ENCODE measurements at regions of chr1 and their contacts with region 1.

Region 1: GRCh38 chr1:58768971-58769808 is 14.7 kb downstream of the JUN start:
- DNase-seq: peak; percentile 42
- H3K4me3 ChIP-seq: no peak overlapping the region
- H3K27ac ChIP-seq: no peak overlapping the region
- H3K4me1 ChIP-seq: peaks cover 16% of the 10 kb centered on the region
- H3K27me3 ChIP-seq: no peaks in the 10 kb centered on the region
- CTCF ChIP-seq: peak; percentile 72 to 85

Region 2: GRCh38 chr1:58515794-58516401 is 253.3 kb before region 1 on chr1:
- CTCF ChIA-PET with region 1: no interaction called
- dilution Hi-C with region 1: no loop called
- in situ Hi-C with region 1: no loop called
- intact Hi-C with region 1: loop called (anchors 2 kb)
- DNase-seq: peak; percentile 51
- H3K4me3 ChIP-seq: no peak overlapping the region
- H3K27ac ChIP-seq: no peak overlapping the region
- H3K4me1 ChIP-seq: no peaks in the 10 kb centered on the region
- H3K27me3 ChIP-seq: no peaks in the 10 kb centered on the region
- CTCF ChIP-seq: peak; percentile 46 to 60

Region 3: GRCh38 chr1:58699011-58699762 is 70.0 kb before region 1 on chr1:
- CTCF ChIA-PET with region 1: no interaction called
- dilution Hi-C with region 1: no loop called
- in situ Hi-C with region 1: no loop called
- intact Hi-C with region 1: loop called (anchors 2 kb)
- DNase-seq: peak; percentile 8
- H3K4me3 ChIP-seq: peak overlapping the region; percentile 54 to 88 (median 82)
- H3K27ac ChIP-seq: peak overlapping the region; percentile 86
- H3K4me1 ChIP-seq: peaks cover 6% of the 10 kb centered on the region
- H3K27me3 ChIP-seq: no peaks in the 10 kb centered on the region
- CTCF ChIP-seq: no peak

Region 4: GRCh38 chr1:58727363-58727762 is 41.8 kb before region 1 on chr1:
- CTCF ChIA-PET with region 1: no interaction called
- dilution Hi-C with region 1: loop called (anchors 5 kb)
- in situ Hi-C with region 1: no loop called
- intact Hi-C with region 1: no loop called
- DNase-seq: peak; percentile 98
- H3K4me3 ChIP-seq: no peak overlapping the region
- H3K27ac ChIP-seq: peak overlapping the region; percentile 74
- H3K4me1 ChIP-seq: peaks cover 30% of the 10 kb centered on the region
- H3K27me3 ChIP-seq: no peaks in the 10 kb centered on the region
- CTCF ChIP-seq: no peak

Region 5: DNA sequence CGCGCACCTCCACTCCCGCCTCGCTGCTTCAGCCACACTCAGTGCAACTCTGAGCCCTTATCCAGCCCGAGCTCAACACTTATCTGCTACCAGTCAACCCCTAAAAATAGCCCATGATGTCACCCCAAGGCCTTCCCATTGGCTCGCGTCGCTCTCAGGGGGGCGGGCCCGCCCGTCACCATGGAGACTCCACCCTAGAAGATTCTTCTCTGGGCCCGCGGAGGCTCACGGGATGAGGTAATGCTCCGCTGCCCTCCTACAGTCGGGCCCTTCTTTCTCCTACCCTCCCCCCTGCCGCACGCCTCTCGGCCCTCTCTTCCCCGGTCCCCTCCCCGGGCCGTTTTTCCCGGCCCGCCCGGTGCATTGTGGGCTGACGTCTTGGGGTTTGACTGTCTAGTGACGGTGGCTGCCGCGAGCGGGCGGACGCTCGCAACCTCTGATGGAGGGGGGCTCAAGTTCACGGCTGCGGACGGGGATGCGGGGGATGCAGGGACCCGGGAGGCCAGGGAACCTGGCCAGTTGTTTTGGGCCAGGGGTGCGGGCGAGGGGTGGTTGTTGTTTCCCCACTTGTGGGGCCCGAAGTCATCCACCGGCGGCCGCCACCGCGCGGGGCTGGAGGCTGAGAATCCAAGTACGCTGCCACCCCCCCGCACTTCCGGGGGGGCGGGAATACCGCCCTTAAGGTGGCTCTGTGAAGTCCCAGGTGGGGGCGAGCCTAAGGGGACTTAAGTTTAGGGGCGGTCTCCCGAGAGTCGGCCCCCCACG is 15.0 kb after region 1 on chr1 and contains the start of gene JUN:
- CTCF ChIA-PET with region 1: no interaction called
- dilution Hi-C with region 1: no loop called
- in situ Hi-C with region 1: no loop called
- intact Hi-C with region 1: no loop called
- DNase-seq: peak; percentile 99
- H3K4me3 ChIP-seq: peak within 1 kb of the TSS; percentile 91 to 96 (median 93)
- H3K27ac ChIP-seq: peak within 1 kb of the TSS; percentile 98
- H3K4me1 ChIP-seq: peaks cover 13% of the 10 kb centered on the region
- H3K27me3 ChIP-seq: no peaks in the 10 kb centered on the region
- CTCF ChIP-seq: peak in 1 of 2 donors; percentile 19
- total RNA-seq, gene JUN: 61.1 to 78.7 TPM

Measured in mammary epithelial cell (primary cell).